ENCODE measurements at regions of chr17 and their contacts with region 1.

Region 1: GRCh38 chr17:36111068-36111490 is 7.5 kb downstream of the CCL4 start:
- DNase-seq: no peak
- ATAC-seq: no peak
- H3K4me3 ChIP-seq: no peak overlapping the region
- H3K4me1 ChIP-seq: no peaks in the 10 kb centered on the region
- CTCF ChIP-seq: no peak

Region 2: GRCh38 chr17:35981908-35982330 is 129.2 kb before region 1 on chr17:
- intact Hi-C with region 1: no loop called
- DNase-seq: peak in 2 of 3 donors; percentile 25 to 51
- ATAC-seq: peak; percentile 61
- H3K4me3 ChIP-seq: no peak overlapping the region
- H3K4me1 ChIP-seq: peaks cover 5% of the 10 kb centered on the region
- CTCF ChIP-seq: no peak

Region 3: GRCh38 chr17:35998018-35998545 is 113.0 kb before region 1 on chr17:
- intact Hi-C with region 1: no loop called
- DNase-seq: no peak
- ATAC-seq: no peak
- H3K4me3 ChIP-seq: no peak overlapping the region
- H3K4me1 ChIP-seq: peaks cover 6% of the 10 kb centered on the region
- CTCF ChIP-seq: no peak

Region 4: GRCh38 chr17:36008998-36009665 is 101.9 kb before region 1 on chr17:
- intact Hi-C with region 1: no loop called
- DNase-seq: no peak
- ATAC-seq: no peak
- H3K4me3 ChIP-seq: no peak overlapping the region
- H3K4me1 ChIP-seq: peaks cover 8% of the 10 kb centered on the region
- CTCF ChIP-seq: no peak

Region 5: DNA sequence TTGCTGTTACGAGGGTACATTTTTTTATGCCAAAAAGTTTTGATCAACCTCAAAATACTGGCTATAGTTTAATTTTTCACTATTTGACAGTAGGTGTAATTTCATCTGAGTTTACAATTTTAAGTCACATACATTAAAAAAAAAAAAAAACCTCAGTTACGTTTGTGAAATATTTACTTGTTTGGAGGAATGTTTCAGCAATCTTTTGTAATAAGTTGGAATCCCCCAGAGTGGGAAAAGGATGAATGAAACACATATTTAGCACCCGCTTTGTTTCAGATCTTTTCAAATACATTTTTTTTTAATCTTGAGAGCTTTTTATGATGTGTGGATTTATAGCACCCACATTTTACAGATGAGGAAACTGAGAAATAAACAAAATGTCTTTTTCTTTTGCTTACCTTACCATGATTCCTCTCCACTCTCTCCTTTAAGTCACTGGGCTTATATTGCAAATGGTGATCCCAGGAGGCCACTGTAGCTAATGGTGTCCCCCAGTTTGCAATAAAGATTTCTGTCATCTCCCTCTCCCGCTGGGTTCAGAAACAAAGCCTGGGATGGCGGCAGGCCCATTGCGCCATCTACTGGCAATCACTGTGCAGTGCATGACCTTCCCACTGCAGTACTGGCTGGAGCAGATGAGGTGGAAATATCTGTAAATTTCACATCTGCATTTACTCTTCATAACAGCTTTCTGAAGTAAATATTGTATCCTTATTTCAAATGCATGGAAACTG is 37.6 kb after region 1 on chr17:
- intact Hi-C with region 1: loop called in 1 of 2 experiments (anchors 5 kb)
- DNase-seq: peak; percentile 79 to 86 (median 83)
- ATAC-seq: peak; percentile 89
- H3K4me3 ChIP-seq: no peak overlapping the region
- H3K4me1 ChIP-seq: peaks cover 9% of the 10 kb centered on the region
- CTCF ChIP-seq: peak; percentile 95

Region 6: GRCh38 chr17:36188891-36189306 is 77.8 kb after region 1 on chr17:
- intact Hi-C with region 1: loop called in 1 of 2 experiments (anchors 5 kb)
- DNase-seq: peak in 1 of 3 donors; percentile 43
- ATAC-seq: peak; percentile 68
- H3K4me3 ChIP-seq: no peak overlapping the region
- H3K4me1 ChIP-seq: peaks cover 10% of the 10 kb centered on the region
- CTCF ChIP-seq: no peak

Region 7: GRCh38 chr17:36812762-36813161 is 701.7 kb after region 1 on chr17:
- intact Hi-C with region 1: no loop called
- DNase-seq: no peak
- ATAC-seq: no peak
- H3K4me3 ChIP-seq: no peak overlapping the region
- H3K4me1 ChIP-seq: no peaks in the 10 kb centered on the region
- CTCF ChIP-seq: no peak